ENCODE measurements at regions of chr15 and their contacts with region 1.

Region 1: GRCh38 chr15:62528505-62528904 is 363.4 kb upstream of the C2CD4B start:
- H3K4me3 ChIP-seq: no peak overlapping the region
- H3K27ac ChIP-seq: no peak overlapping the region
- H3K4me1 ChIP-seq: no peaks in the 10 kb centered on the region
- CTCF ChIP-seq: no peak

Region 2: DNA sequence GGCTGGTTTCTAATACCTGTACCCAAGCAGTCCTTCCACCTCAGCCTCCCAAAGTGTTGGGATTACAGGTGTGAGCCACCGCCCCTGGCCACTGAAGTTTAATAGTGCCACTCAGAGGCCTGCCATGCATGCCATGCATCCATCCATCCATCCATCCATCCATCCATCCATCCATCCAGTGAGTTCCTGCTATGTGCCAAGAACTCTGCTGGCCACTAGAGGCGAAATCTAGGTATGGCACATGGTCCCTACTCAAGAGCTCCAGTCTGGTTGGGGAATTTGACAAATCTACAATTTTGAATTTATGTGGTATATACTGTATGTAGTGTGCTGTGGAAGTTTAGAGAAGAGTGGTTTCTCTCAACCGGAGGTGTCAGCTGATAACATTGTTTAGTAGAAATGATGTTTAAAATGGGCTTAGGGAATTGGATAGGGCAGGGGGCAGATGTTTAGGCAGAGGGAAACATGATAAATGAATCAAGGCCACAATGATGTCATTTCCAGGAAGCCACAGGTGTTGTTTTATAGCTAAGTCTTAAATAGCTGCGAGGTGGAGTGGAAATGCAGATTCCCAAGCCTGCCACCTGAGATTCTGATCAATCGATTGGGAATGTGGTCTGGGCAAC is 21.0 kb after region 1 on chr15:
- CTCF ChIA-PET with region 1: interaction called, 12 read pairs
- POLR2A ChIA-PET with region 1: no interaction called
- H3K4me3 ChIP-seq: no peak overlapping the region
- H3K27ac ChIP-seq: no peak overlapping the region
- H3K4me1 ChIP-seq: no peaks in the 10 kb centered on the region
- CTCF ChIP-seq: no peak

Measured in HEK293 (cell line).